Right cardiac atrium (tissue), 5 donors: ENCODE measurements at regions of chr3 and their contacts with region 1.

Region 1: DNA sequence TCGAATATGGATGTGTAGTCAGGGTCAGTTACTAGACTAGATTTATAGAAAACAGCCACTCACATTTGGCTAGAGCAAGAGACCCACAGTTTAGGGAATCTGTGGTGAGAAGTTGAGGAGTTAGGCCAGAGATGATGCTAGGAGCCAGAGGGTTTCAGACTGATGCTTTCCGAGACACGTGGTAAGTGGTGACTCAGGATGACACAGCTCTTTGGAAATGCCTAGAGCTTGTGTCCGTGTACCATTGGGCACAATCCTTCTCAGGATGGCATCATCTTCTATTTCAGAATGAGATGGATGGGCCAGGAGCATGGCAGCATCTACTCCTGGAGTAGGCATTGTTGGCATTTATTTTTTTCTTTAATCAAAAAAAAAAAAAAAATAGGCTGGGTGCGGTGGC is 28.5 kb downstream of the PTPRG start:
- DNase-seq: no peak
- ATAC-seq: peak in 1 of 2 donors; percentile 10
- H3K4me3 ChIP-seq: no peak overlapping the region
- H3K27ac ChIP-seq: no peak overlapping the region
- H3K4me1 ChIP-seq: peaks cover 12% of the 10 kb centered on the region
- H3K27me3 ChIP-seq: no peaks in the 10 kb centered on the region

Region 2: DNA sequence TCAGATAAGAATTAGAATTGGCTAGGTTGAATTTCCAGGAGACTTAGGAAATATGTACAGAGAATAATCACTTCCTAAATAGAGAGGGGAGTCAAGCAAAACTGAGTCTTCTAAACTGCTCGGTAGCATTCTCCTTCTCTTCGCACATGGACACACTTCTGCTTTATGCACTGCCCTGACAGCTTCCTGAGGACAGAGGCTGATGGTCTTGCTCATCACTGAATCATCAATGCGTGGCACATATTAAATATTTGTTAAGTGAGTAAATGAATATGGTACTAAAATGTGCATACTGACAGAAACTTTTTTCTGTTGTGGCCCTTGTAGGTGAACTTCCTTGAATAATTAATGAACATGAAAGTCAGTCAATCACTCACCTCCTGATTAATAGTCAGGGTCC is 654.1 kb before region 1 on chr3:
- intact Hi-C with region 1: no loop called
- DNase-seq: no peak
- ATAC-seq: no peak
- H3K4me3 ChIP-seq: no peak overlapping the region
- H3K27ac ChIP-seq: no peak overlapping the region
- H3K4me1 ChIP-seq: no peaks in the 10 kb centered on the region
- H3K27me3 ChIP-seq: no peaks in the 10 kb centered on the region

Region 3: DNA sequence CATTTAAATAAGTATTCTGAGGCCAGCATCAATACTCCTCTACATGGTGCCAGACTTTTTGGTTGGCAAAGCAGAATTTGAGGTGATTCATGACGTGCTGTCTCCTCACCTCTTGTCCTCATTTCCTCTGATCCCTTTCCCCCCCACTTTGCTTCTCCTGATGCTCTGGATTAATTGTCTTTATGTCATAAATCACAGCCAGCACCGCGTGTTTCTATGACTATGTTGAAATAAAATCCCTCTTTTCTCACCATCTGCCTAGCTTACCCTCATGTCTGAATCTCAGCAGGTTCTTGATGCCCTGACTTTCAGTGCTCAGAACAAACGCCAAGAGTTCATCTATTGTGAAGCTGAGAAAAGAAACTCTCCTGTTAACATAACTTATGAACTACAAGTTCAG is 48.2 kb before region 1 on chr3:
- intact Hi-C with region 1: no loop called
- DNase-seq: no peak
- ATAC-seq: no peak
- H3K4me3 ChIP-seq: no peak overlapping the region
- H3K27ac ChIP-seq: no peak overlapping the region
- H3K4me1 ChIP-seq: peaks cover 3% of the 10 kb centered on the region
- H3K27me3 ChIP-seq: no peaks in the 10 kb centered on the region

Region 4: DNA sequence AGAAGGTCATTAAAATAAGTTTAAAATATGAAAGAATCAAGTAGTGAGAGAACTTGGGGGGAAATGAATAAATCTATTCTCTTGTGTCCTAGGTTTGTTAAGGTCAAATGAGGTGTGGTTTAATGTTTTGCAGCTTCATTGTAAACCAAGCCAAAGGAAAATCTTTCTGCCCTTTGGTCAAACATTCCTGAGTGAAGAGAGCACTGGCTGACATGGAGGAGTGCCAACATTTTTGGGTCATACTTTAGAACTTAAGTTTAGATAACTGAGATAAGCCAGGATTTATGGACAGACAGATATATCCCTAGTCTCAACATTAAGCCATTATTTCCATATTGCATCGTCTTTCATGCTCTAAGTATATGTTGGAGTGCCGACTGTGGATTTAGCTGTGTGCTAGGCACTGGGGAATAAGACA is 37.9 kb after region 1 on chr3:
- intact Hi-C with region 1: no loop called
- DNase-seq: no peak
- ATAC-seq: peak; percentile 42 to 52
- H3K4me3 ChIP-seq: no peak overlapping the region
- H3K27ac ChIP-seq: no peak overlapping the region
- H3K4me1 ChIP-seq: peaks cover 3% of the 10 kb centered on the region
- H3K27me3 ChIP-seq: no peaks in the 10 kb centered on the region

Region 5: GRCh38 chr3:61645148-61645547 is 55.3 kb after region 1 on chr3:
- intact Hi-C with region 1: loop called in 1 of 4 experiments (anchors 10 kb)
- DNase-seq: no peak
- ATAC-seq: no peak
- H3K4me3 ChIP-seq: no peak overlapping the region
- H3K27ac ChIP-seq: no peak overlapping the region
- H3K4me1 ChIP-seq: peaks cover 8% of the 10 kb centered on the region
- H3K27me3 ChIP-seq: no peaks in the 10 kb centered on the region

Region 6: DNA sequence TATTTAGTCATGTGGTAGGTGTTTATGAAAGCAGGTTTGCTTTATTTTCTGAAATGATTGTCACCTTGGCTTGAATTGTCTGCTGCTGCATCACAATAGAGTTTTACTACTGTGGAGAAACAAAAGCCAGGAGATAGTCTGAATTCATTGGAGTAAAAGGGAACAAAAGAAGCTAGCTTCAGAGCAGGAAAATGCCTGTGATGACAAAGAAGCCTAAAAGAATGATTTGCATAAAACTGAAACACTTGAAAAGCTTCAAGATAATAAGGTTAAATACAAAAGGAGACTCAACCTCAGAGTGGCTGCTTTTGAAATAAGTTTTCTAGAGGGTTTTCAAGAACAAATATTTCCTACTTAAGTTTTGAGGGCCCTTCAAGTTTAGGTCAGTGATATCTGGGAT is 109.8 kb after region 1 on chr3:
- intact Hi-C with region 1: loop called in 1 of 4 experiments (anchors 10 kb)
- DNase-seq: no peak
- ATAC-seq: no peak
- H3K4me3 ChIP-seq: no peak overlapping the region
- H3K27ac ChIP-seq: no peak overlapping the region
- H3K4me1 ChIP-seq: peaks cover 1% of the 10 kb centered on the region
- H3K27me3 ChIP-seq: no peaks in the 10 kb centered on the region

Region 7: GRCh38 chr3:61761694-61762430 is 172.0 kb after region 1 on chr3:
- intact Hi-C with region 1: no loop called
- DNase-seq: no peak
- ATAC-seq: peak in 1 of 2 donors; percentile 60
- H3K4me3 ChIP-seq: no peak overlapping the region
- H3K27ac ChIP-seq: no peak overlapping the region
- H3K4me1 ChIP-seq: no peaks in the 10 kb centered on the region
- H3K27me3 ChIP-seq: no peaks in the 10 kb centered on the region